Endothelial cell of umbilical vein (primary cell): ENCODE measurements at regions of chr18 and their contacts with region 1.

Region 1: GRCh38 chr18:48951448-48952286 is 902 bp upstream of the SMAD7 start:
- DNase-seq: peak; percentile 91
- H3K4me3 ChIP-seq: peak overlapping the region; percentile 58 to 83 (median 79)
- H3K27ac ChIP-seq: peak overlapping the region; percentile 97
- H3K4me1 ChIP-seq: peaks cover 47% of the 10 kb centered on the region
- H3K27me3 ChIP-seq: no peaks in the 10 kb centered on the region
- CTCF ChIP-seq: peak in 1 of 2 donors; percentile 28
- POLR2A ChIP-seq: peak; percentile 49

Region 2: DNA sequence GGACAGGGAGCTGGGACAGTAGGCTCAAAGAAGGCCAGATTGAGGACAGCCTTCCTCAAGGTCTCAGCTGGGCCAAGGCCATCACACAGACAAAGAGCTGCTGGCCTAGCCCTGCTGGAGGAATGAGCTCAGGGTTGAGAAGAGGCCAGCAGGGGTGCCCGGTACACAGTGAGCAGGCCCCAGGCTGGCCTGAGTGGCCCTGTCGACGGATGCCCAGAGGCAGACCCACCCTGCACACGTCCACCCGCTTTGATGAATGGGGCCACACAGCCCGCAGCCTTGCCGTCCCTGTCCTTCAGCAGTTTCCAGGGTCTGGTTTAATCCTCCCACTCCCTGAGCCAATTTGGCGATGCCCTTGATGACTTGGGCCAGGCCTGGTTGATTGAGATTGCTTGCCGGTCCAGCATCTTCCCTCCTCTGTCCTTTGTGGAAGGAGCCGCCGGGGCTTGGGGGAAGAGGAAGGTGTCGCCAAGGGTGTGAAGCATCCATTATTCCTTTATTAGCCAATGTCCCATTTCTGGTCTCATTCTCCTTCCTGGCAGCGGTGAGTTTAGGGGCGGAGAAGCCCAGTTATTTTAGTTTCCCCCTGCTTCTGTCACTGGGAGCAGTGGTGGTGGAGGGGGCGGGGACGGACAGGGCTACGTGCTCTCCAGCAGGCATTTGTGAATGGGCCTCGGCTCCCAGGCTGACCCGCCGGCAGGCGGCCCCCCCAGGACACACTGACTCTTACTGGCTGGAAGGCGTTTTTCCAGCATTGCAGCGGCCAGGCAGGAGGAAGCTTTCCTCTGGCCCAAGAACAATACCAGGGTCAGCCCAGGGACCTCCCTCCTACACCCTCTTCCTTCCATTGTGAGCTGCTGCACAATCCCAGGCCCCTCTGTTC is 271.1 kb before region 1 on chr18:
- CTCF ChIA-PET with region 1: interaction called, 3 read pairs
- POLR2A ChIA-PET with region 1: no interaction called
- dilution Hi-C with region 1: no loop called
- intact Hi-C with region 1: loop called (anchors 2 kb)
- DNase-seq: peak; percentile 96
- H3K4me3 ChIP-seq: no peak overlapping the region
- H3K27ac ChIP-seq: peak overlapping the region; percentile 42
- H3K4me1 ChIP-seq: peaks cover 17% of the 10 kb centered on the region
- H3K27me3 ChIP-seq: no peaks in the 10 kb centered on the region
- CTCF ChIP-seq: peak; percentile 26 to 67
- POLR2A ChIP-seq: no peak

Region 3: DNA sequence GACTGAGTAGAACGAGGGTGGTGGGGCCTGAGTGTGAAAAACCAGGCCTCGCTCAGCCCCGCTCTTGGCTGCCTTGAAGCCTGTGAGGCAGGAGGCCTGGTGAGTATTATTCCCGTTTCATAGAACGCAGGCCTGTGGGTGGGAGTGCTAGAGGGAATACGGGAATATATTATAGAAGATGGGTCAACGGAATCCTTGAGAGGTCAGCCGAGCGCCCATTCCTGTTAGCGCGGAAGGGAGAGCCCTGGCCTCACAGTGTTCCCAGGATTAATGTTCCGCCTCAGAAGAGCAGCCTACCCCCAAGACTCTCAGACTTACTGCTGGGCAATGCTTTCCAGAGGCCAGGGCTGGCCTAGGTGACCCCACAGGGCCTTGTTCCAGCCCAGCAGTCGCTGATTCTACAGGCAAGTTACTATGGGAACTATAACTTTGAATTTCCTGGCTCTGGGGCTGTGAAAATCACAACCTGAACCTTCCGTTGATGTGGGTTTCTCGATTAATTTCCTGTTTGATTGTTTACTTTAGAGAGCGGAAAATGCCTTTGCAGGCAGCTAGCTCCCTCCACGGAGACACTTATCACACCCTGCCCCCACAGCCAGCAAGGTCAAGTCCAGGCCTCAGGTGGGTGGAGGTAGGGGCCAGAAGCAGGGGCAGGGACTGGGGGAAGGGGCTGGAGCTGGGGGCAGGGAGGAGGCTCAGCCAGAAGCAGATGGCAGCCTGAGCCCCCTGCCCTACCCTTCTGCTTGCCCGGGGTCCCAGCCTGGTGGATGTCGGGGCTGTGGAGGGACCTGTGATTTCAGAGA is 109.2 kb before region 1 on chr18:
- CTCF ChIA-PET with region 1: interaction called, 3 read pairs
- POLR2A ChIA-PET with region 1: no interaction called
- dilution Hi-C with region 1: no loop called
- intact Hi-C with region 1: loop called (anchors 2 kb)
- DNase-seq: peak; percentile 95
- H3K4me3 ChIP-seq: no peak overlapping the region
- H3K27ac ChIP-seq: peak overlapping the region; percentile 74
- H3K4me1 ChIP-seq: peaks cover 60% of the 10 kb centered on the region
- H3K27me3 ChIP-seq: no peaks in the 10 kb centered on the region
- CTCF ChIP-seq: no peak
- POLR2A ChIP-seq: no peak

Region 4: GRCh38 chr18:48940854-48941611 is 10.6 kb before region 1 on chr18:
- CTCF ChIA-PET with region 1: interaction called, 10 read pairs
- POLR2A ChIA-PET with region 1: no interaction called
- dilution Hi-C with region 1: no loop called
- intact Hi-C with region 1: loop called (anchors 1 kb)
- DNase-seq: peak; percentile 58
- H3K4me3 ChIP-seq: no peak overlapping the region
- H3K27ac ChIP-seq: peak overlapping the region; percentile 26
- H3K4me1 ChIP-seq: peaks cover 56% of the 10 kb centered on the region
- H3K27me3 ChIP-seq: no peaks in the 10 kb centered on the region
- CTCF ChIP-seq: no peak
- POLR2A ChIP-seq: peak; percentile 23

Region 5: GRCh38 chr18:49178736-49179135 is 227.1 kb after region 1 on chr18:
- CTCF ChIA-PET with region 1: interaction called, 5 read pairs
- POLR2A ChIA-PET with region 1: no interaction called
- dilution Hi-C with region 1: no loop called
- intact Hi-C with region 1: loop called (anchors 2 kb)
- DNase-seq: peak; percentile 37
- H3K4me3 ChIP-seq: no peak overlapping the region
- H3K27ac ChIP-seq: no peak overlapping the region
- H3K4me1 ChIP-seq: peaks cover 18% of the 10 kb centered on the region
- H3K27me3 ChIP-seq: no peaks in the 10 kb centered on the region
- CTCF ChIP-seq: peak; percentile 44 to 48
- POLR2A ChIP-seq: no peak

Region 6: DNA sequence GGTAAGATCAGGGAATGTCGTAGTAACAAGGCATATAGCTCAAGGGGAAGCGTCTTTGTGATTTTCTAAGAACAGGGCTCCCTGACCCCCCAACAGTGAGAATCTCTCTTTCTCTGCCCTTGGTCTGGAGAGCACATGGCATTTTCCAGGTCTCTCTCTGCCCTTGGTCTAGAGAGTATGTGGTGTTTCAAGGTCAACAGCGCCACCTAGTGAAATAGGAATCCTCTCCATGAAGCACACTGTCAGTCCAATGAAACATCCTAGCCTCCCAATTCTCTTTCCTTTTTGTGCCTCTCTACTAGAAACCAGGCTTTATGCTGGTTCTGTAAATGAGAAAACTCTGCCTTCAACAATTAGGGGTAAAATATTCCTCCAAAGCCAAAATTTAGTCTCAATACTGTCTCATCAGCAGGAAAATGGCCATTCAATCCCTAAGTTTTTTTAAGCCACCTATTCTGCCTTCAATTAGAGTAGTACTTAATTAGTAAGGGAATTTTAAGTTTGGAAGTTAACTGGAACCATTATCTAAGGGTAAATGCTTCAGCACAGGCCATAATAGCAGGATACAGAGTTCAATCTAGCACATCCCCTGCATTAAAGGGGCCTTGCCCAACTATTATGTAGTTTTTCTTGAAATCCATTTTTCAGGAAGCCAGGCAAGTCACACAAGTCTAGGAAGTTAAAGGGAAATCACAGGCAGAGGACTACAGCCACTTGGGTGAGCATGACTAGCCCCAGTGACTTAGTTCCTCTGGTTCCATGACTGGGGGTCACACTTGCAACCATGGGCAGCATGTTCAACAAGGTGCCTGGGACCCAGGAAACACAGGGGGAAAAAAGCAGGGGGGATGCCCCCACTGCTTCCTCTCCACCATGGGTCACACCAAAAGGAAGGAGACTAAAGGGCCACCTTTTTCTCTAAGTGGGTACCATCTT is 496.4 kb after region 1 on chr18:
- CTCF ChIA-PET with region 1: no interaction called
- POLR2A ChIA-PET with region 1: no interaction called
- dilution Hi-C with region 1: no loop called
- intact Hi-C with region 1: loop called (anchors 5 kb)
- DNase-seq: peak; percentile 53
- H3K4me3 ChIP-seq: no peak overlapping the region
- H3K27ac ChIP-seq: no peak overlapping the region
- H3K4me1 ChIP-seq: no peaks in the 10 kb centered on the region
- H3K27me3 ChIP-seq: no peaks in the 10 kb centered on the region
- CTCF ChIP-seq: peak; percentile 68
- POLR2A ChIP-seq: no peak